CD8-positive, alpha-beta T cell (primary cell): ENCODE measurements at regions of chr2 and their contacts with region 1.

Region 1: DNA sequence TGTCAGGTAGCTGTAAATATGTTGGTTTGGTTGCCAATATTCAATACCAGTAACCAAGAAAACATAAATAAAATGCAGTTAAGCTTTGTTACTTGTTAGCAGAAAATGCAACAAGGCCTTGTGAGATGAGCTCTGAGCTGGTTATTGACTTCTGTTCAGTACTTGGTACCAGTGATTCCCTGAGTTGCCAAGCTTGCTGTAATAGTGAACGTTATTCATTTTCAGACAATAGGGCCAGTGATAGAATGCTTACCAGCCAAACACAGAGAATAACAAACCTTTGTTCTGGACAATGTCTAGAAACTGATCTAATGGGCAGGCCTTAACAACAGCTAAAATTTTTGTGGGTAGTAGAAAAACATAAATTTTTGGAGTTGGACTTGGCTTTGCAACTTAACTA is 29.5 kb downstream of the RASGRP3 start:
- DNase-seq: no peak
- ATAC-seq: no peak
- H3K4me3 ChIP-seq: no peak overlapping the region
- H3K4me3 Mint-ChIP-seq: no peak overlapping the region
- H3K27ac ChIP-seq: no peak overlapping the region
- H3K27ac Mint-ChIP-seq: no peak overlapping the region
- H3K4me1 ChIP-seq: no peaks in the 10 kb centered on the region
- H3K4me1 Mint-ChIP-seq: no peaks in the 10 kb centered on the region
- H3K27me3 ChIP-seq: no peaks in the 10 kb centered on the region
- H3K27me3 Mint-ChIP-seq: peaks cover 2% of the 10 kb centered on the region
- CTCF ChIP-seq: no peak

Region 2: DNA sequence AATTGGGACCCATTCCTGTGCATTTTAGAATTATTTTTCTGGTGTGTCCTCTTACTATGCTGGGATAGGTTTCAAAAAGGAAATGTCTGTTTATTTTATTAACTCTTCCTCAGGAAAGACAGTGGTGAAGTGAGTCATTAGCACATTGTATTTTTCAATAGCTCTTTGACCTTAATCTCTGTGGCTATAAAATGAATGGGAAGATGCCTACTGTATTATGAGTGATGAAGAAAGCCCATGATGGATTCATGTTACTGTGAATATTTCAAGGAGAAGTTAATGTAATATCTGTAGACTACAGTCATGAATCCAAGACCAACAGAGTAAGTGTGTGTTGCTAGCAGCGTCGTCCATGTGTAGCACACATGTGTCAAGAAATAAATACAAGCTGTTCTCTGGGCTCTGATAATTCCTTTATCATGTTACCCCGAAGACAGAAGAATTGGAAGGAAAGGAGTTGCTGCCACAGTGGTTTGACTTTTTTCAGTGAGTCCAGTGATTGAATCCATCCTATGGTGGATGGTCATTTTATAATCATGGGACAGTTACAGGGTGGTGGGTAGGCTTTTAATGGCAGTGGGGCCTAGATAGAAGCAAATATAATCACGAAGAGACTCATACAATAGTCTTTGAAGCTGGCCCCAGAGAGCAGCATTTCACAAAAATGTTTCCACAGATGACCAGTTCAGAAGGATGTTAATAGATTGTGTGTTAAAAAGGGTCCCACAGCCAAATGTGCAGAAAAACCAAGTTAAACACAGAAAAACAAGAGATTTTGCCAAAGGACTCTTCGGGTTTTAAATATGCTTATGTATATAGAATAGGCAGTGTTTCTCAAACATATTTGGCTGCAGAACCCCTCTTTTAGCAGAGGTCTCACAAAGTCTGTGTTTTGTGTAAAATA is 269.2 kb before region 1 on chr2:
- CTCF ChIA-PET with region 1: no interaction called
- POLR2A ChIA-PET with region 1: no interaction called
- intact Hi-C with region 1: no loop called
- DNase-seq: no peak
- ATAC-seq: no peak
- H3K4me3 ChIP-seq: no peak overlapping the region
- H3K4me3 Mint-ChIP-seq: no peak overlapping the region
- H3K27ac ChIP-seq: no peak overlapping the region
- H3K27ac Mint-ChIP-seq: no peak overlapping the region
- H3K4me1 ChIP-seq: no peaks in the 10 kb centered on the region
- H3K4me1 Mint-ChIP-seq: no peaks in the 10 kb centered on the region
- H3K27me3 ChIP-seq: no peaks in the 10 kb centered on the region
- H3K27me3 Mint-ChIP-seq: peaks cover 4% of the 10 kb centered on the region
- CTCF ChIP-seq: no peak

Region 3: DNA sequence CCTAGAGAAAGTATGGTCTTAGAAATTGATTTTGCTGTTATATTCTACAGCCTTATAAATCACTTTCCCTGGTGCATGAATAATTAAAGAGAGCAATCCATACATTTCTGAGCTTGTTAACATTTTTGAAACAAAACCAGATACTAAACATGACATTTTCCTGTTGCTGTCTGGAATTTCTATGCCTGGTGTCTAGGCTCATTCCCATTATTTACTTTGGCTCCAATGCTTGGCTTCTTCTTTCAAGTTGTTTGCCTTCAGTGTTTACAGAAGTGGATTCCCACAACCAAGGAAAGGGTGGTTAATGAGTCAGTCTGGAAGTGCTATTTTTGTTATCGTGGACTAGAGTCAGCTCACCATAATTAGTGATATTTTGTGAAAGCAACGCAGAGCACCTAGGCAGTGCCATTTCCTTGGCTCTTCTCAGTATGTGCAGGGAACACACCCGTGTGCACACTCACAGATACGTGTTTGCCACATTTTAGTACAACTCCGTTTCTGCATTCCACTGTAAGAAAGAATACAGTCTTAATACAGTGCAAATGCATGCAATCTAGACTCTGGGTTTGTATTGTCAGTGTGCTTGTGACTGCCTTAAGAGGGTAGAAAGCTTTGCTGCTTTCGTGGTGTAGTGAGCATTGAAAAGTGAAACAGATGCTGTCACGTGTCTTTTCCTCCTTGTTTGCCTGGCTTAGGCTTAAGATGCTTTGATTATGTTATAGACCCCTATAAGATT is 214.5 kb before region 1 on chr2:
- CTCF ChIA-PET with region 1: no interaction called
- POLR2A ChIA-PET with region 1: no interaction called
- intact Hi-C with region 1: no loop called
- DNase-seq: no peak
- ATAC-seq: no peak
- H3K4me3 ChIP-seq: no peak overlapping the region
- H3K4me3 Mint-ChIP-seq: no peak overlapping the region
- H3K27ac ChIP-seq: no peak overlapping the region
- H3K27ac Mint-ChIP-seq: no peak overlapping the region
- H3K4me1 ChIP-seq: no peaks in the 10 kb centered on the region
- H3K4me1 Mint-ChIP-seq: no peaks in the 10 kb centered on the region
- H3K27me3 ChIP-seq: no peaks in the 10 kb centered on the region
- H3K27me3 Mint-ChIP-seq: peaks cover 2% of the 10 kb centered on the region
- CTCF ChIP-seq: no peak

Region 4: GRCh38 chr2:33457556-33458247 is 48.3 kb before region 1 on chr2:
- CTCF ChIA-PET with region 1: no interaction called
- POLR2A ChIA-PET with region 1: no interaction called
- intact Hi-C with region 1: loop called in 1 of 2 experiments (anchors 10 kb)
- DNase-seq: no peak
- ATAC-seq: no peak
- H3K4me3 ChIP-seq: no peak overlapping the region
- H3K4me3 Mint-ChIP-seq: no peak overlapping the region
- H3K27ac ChIP-seq: no peak overlapping the region
- H3K27ac Mint-ChIP-seq: no peak overlapping the region
- H3K4me1 ChIP-seq: no peaks in the 10 kb centered on the region
- H3K4me1 Mint-ChIP-seq: no peaks in the 10 kb centered on the region
- H3K27me3 ChIP-seq: no peaks in the 10 kb centered on the region
- H3K27me3 Mint-ChIP-seq: no peaks in the 10 kb centered on the region
- CTCF ChIP-seq: no peak